Right ventricle myocardium inferior (tissue), 1 donor: ENCODE measurements at regions of chr6 and their contacts with region 1.

Region 1: DNA sequence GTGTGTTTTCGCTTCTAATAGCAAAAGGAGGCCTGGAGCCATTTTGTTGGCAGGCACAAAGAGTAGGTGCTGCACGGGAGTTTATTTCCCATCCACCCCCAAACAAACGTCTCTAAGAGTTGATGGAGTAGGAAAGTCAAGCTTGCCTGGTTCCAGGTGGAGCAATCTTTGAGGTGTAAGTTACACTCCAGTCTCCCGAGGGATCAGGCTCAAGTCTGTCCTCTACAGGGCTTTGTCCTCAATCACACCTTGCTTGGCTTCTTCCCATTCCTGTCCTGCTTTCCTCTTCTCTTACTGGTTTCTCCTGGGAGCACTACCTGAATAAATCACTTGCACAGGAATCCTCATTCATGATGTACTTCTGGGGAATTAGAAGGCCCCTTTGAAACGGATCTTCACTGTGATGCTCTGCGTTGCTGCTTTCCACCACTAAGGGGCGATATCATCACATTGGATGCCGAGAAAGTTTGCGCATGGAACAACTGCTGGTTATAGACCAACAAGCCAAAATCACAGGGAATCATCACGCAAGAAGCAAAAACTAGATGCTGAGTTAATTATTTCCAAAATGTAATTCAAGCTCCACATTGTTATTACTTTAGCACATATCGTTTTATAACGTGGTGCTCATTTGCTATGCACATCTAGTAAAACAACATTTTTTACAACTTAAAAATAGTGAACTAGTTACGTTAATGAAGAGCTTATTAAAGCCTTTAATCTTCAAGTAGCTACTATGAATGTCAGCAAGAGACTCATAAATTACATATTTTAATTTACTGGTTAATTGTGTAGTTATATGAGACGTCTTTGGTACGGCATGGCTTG is 156.8 kb downstream of the DNAH8 start:
- DNase-seq: no peak
- ATAC-seq: no peak

Region 2: DNA sequence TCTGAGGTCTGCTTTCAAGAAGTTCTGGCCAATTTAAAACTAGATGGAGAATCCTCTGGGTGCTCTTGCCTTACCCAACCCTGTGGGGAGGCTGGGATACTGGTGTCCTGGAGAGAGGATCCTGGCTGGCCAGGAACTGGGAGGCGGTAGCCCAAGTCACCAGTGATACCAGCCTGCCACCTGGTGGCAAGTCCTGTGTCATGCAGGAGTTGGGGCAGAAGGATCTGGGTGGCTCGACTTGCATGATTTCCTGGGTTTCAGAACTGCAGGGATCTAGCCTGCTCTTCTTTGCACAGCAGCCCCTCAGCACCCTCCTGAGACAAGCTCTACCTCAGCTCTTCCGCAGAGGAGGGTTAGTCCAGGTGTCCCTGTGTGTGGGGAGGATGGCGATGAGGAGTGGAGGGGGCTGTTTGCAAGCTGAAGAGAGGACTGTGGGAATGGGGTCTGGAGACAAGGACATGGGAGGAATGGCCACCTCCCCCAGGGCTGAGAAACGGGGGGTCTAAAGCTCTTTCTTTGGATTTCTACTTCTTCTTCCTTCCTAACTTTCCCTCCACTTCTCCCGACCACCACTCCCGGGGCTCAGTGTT is 438.1 kb after region 1 on chr6:
- intact Hi-C with region 1: loop called (anchors 2 kb)
- DNase-seq: peak; percentile 81
- ATAC-seq: peak; percentile 72